Activated naive CD4-positive, alpha-beta T cell treated with anti-CD3 and anti-CD28 coated beads, Interleukin-2, amount 10 ng/mL, durations not matched to agents 7 days and 5 days (primary cell): ENCODE measurements at regions of chr10 and their contacts with region 1.

Region 1: GRCh38 chr10:87861953-87862678 is 1.2 kb downstream of the KLLN start:
- DNase-seq: peak; percentile 96
- H3K4me3 Mint-ChIP-seq: peak overlapping the region; percentile 93
- H3K27ac Mint-ChIP-seq: peak overlapping the region; percentile 97
- H3K4me1 Mint-ChIP-seq: peaks cover 31% of the 10 kb centered on the region
- H3K27me3 Mint-ChIP-seq: peaks cover 11% of the 10 kb centered on the region

Region 2: DNA sequence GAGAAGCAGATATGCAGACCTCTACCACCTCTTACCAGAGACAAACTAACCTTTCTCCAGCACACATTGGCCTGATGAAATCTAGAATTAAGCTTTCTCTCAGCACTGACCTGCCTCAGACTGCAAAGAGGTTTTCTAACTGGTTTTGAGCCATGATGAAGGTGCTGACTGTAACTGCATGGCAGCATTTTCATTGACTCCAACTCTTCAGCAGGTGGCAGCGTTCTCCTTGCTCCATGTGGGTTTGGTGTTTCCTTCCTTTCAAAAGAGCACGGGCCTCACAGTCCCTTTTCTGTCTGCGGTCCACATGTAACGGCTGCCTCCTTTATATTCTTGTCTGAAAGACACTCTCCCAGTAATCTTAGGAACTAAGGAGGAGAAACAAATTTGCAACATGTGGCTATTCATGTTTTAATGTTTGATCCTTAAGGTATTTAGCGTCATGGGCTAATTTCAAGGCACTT is 11.3 kb before region 1 on chr10:
- CTCF ChIA-PET with region 1: interaction called, 11 read pairs
- DNase-seq: peak; percentile 70
- H3K4me3 Mint-ChIP-seq: no peak overlapping the region
- H3K27ac Mint-ChIP-seq: no peak overlapping the region
- H3K4me1 Mint-ChIP-seq: peaks cover 15% of the 10 kb centered on the region
- H3K27me3 Mint-ChIP-seq: no peaks in the 10 kb centered on the region

Region 3: DNA sequence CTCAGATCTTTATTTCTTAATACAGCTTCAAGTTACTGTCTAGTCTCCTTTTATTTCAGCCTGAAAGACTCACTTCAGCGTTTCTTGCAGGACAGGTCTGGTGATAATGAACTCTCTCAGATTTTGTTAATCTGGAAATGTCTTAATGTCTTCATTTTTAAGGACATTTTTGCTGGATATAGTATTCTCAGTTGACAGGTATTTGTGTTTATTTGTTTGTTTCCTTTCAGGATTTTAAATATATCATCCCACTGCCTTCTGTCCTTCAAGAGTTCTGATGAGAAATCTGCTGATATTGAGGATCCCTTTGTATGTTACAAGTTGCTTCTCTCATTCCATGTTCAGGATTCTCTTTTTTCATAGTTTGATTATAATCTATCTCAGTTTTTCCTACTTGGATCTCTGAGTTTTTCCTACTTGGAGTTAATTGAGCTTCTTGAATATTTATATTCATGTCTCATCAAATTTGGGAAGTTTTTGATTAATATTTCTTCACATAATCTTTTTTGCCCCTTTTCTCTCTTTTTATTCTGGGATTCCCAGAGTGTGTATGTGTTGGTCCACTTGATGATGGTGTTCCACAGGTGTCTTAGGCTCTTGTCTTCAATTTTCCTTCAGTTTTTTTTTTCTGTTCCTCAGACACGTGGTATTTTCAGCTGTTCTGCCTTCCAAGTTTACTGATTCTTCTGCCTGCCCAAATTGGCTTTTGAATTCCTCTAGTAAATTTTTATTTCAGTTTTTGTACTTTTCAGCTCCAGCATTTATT is 51.2 kb after region 1 on chr10:
- CTCF ChIA-PET with region 1: no interaction called
- DNase-seq: no peak
- H3K4me3 Mint-ChIP-seq: no peak overlapping the region
- H3K27ac Mint-ChIP-seq: no peak overlapping the region
- H3K4me1 Mint-ChIP-seq: peaks cover 26% of the 10 kb centered on the region
- H3K27me3 Mint-ChIP-seq: no peaks in the 10 kb centered on the region

Region 4: GRCh38 chr10:87925570-87925969 is 63.5 kb after region 1 on chr10:
- CTCF ChIA-PET with region 1: no interaction called
- DNase-seq: no peak
- H3K4me3 Mint-ChIP-seq: no peak overlapping the region
- H3K27ac Mint-ChIP-seq: no peak overlapping the region
- H3K4me1 Mint-ChIP-seq: peaks cover 53% of the 10 kb centered on the region
- H3K27me3 Mint-ChIP-seq: no peaks in the 10 kb centered on the region

Region 5: DNA sequence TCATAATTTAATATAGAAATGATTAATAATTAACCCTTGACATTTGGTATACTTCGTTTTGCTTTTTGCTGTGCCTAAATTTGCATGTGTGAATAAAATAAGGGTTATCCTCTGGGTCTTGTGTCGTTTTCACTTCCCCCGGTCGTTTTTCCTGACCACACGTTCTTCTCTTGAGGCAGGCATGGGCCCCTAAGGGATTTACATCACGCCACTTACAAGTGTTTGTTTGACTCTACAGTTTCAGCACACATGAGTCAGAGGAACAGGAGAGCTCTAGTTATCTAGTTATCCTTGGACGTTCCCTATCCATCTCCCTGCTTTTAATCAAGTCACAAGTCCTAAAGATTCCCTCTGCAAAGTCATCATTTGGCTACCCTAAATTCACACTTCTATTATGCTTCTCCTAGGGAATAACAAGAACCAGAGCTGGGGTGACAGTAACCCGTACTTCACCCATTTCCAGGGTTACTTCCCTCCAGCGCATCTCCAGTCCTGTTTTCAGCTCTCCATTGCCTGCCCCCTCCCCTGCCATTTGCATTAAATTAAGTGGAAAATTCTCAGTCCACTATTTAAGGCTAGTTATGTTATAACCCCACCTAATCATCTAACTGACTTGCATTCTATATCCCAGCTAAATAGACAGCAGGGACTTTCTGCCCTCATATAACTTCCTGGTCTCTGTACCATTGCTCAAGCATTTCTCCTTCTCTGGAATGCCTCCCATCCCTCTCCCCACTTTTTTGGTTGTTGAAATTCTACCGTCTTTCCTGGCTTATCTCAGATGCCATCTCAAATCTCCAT is 208.2 kb after region 1 on chr10:
- CTCF ChIA-PET with region 1: no interaction called
- DNase-seq: no peak
- H3K4me3 Mint-ChIP-seq: no peak overlapping the region
- H3K27ac Mint-ChIP-seq: no peak overlapping the region
- H3K4me1 Mint-ChIP-seq: peaks cover 26% of the 10 kb centered on the region
- H3K27me3 Mint-ChIP-seq: no peaks in the 10 kb centered on the region

Region 6: GRCh38 chr10:88091490-88092105 is 229.5 kb after region 1 on chr10:
- CTCF ChIA-PET with region 1: interaction called, 10 read pairs
- DNase-seq: peak; percentile 85
- H3K4me3 Mint-ChIP-seq: no peak overlapping the region
- H3K27ac Mint-ChIP-seq: peak overlapping the region; percentile 85
- H3K4me1 Mint-ChIP-seq: peaks cover 37% of the 10 kb centered on the region
- H3K27me3 Mint-ChIP-seq: peaks cover 23% of the 10 kb centered on the region

Region 7: DNA sequence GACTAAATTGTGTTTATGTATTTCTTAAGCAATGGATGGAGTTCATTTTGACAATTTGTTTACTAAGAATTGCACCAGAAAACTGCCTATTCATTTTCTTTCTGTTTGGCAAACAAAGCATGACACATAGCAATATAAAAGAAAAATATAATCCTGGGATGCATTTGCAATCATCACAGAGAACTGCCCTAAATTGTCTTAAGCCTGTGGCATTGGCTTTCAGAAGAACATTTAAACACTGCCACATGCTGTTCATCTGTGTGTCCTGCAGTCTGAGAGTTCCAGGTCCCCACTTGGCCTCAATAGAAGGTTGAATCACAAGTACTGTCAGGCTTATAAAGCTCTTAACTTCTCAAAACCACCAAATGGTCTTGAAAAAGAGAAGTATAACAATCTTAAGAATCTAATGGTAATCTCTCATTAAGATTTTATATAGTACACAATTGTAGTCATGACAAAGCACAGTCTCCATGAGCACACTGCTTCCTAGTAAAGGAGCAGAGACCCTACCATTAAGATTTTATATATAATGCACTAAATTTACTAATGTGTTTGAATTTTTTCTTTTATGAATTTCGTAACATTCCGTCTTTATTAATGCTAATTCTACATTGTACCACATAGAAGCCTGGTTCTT is 691.1 kb after region 1 on chr10:
- CTCF ChIA-PET with region 1: interaction called, 13 read pairs
- DNase-seq: peak; percentile 57
- H3K4me3 Mint-ChIP-seq: no peak overlapping the region
- H3K27ac Mint-ChIP-seq: no peak overlapping the region
- H3K4me1 Mint-ChIP-seq: no peaks in the 10 kb centered on the region
- H3K27me3 Mint-ChIP-seq: no peaks in the 10 kb centered on the region